Activated CD8-positive, alpha-beta T cell treated with anti-CD3 and anti-CD28 coated beads, Interleukin-2, amount 10 ng/mL, durations not matched to agents 7 days and 5 days (primary cell): ENCODE measurements at regions of chr16 and their contacts with region 1.

Region 1: DNA sequence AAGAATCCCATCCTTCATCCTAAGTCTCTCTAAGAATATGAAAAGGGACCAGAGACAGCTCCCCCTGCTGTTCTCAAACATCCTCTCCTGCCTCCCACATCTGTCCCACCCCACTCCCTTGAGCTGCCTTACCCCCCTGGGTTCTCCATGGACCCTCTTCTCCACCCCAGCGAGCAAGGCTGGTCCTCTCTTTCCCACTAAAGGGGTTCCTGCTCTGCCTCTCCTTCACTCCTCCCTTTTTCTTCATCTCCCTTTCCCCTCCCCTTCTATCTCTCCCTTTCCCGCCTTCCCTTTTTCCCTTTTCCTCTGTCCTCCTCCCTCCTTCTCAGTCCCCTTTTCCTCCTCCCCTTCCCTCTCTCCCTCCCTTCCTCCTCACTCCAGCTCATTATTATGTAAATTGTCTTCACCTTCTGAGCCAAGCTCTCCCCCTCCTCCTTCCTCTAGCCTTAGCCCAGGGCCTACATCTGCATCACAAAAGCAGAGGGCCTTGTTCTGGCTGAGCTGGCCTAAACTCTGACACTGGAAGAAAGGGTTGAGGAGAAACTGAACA is 90.0 kb downstream of the GNAO1 start:
- DNase-seq: peak; percentile 26
- ATAC-seq: no peak
- H3K4me3 Mint-ChIP-seq: no peak overlapping the region
- H3K27ac Mint-ChIP-seq: no peak overlapping the region
- H3K4me1 Mint-ChIP-seq: peaks cover 24% of the 10 kb centered on the region
- H3K27me3 Mint-ChIP-seq: no peaks in the 10 kb centered on the region

Region 2: GRCh38 chr16:56262148-56262547 is 19.2 kb before region 1 on chr16:
- CTCF ChIA-PET with region 1: interaction called, 29 read pairs
- POLR2A ChIA-PET with region 1: no interaction called
- DNase-seq: peak; percentile 66
- ATAC-seq: peak; percentile 81
- H3K4me3 Mint-ChIP-seq: peak overlapping the region; percentile 32
- H3K27ac Mint-ChIP-seq: peak overlapping the region; percentile 60
- H3K4me1 Mint-ChIP-seq: peaks cover 32% of the 10 kb centered on the region
- H3K27me3 Mint-ChIP-seq: no peaks in the 10 kb centered on the region